ENCODE measurements at regions of chr14 and their contacts with region 1.

Region 1: DNA sequence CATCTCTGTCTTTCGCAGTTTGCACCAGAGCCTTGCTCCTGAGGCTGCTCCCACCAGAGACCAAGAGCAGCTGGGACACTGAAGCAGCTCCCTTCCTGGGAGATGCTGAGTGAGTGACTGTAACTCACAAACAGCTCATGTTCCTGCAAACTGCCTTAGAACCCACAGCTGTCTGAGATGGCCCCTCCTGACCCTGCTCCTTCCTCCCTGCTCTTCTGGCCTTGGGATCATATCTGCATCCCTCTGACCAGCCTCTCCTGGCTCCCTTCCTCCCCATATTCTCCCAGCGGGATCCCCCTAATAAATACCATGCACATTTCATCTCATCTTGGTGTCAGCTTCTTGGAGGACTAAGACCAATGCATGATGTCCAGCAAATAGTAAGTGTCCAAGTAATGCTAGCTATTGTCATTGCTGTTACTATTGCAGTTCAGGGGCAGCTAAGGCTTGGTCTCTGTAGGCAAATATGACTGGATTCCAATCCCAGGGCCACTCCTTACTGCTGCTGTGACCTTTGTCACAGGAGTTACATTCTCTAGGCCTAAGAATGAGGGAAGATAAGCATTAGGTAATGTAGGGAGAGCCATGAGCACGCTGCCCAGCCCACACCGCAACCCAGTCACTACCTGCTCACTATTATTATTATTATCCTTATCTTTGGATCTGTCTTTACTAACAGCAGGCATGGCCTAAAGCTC is 47.9 kb downstream of the SYNE3 start:
- DNase-seq: peak; percentile 88 to 94
- H3K4me3 ChIP-seq: no peak overlapping the region
- H3K4me3 Mint-ChIP-seq: peak overlapping the region; percentile 57
- H3K27ac Mint-ChIP-seq: peak overlapping the region; percentile 94
- H3K4me1 ChIP-seq: peaks cover 58% of the 10 kb centered on the region
- H3K4me1 Mint-ChIP-seq: peaks cover 41% of the 10 kb centered on the region
- H3K27me3 ChIP-seq: no peaks in the 10 kb centered on the region
- H3K27me3 Mint-ChIP-seq: no peaks in the 10 kb centered on the region
- CTCF ChIP-seq: no peak

Region 2: GRCh38 chr14:95402176-95402575 is 66.4 kb before region 1 on chr14:
- CTCF ChIA-PET with region 1: no interaction called
- POLR2A ChIA-PET with region 1: no interaction called
- intact Hi-C with region 1: no loop called
- DNase-seq: no peak
- H3K4me3 ChIP-seq: no peak overlapping the region
- H3K4me3 Mint-ChIP-seq: no peak overlapping the region
- H3K27ac Mint-ChIP-seq: no peak overlapping the region
- H3K4me1 ChIP-seq: no peaks in the 10 kb centered on the region
- H3K4me1 Mint-ChIP-seq: no peaks in the 10 kb centered on the region
- H3K27me3 ChIP-seq: no peaks in the 10 kb centered on the region
- H3K27me3 Mint-ChIP-seq: no peaks in the 10 kb centered on the region
- CTCF ChIP-seq: no peak

Region 3: DNA sequence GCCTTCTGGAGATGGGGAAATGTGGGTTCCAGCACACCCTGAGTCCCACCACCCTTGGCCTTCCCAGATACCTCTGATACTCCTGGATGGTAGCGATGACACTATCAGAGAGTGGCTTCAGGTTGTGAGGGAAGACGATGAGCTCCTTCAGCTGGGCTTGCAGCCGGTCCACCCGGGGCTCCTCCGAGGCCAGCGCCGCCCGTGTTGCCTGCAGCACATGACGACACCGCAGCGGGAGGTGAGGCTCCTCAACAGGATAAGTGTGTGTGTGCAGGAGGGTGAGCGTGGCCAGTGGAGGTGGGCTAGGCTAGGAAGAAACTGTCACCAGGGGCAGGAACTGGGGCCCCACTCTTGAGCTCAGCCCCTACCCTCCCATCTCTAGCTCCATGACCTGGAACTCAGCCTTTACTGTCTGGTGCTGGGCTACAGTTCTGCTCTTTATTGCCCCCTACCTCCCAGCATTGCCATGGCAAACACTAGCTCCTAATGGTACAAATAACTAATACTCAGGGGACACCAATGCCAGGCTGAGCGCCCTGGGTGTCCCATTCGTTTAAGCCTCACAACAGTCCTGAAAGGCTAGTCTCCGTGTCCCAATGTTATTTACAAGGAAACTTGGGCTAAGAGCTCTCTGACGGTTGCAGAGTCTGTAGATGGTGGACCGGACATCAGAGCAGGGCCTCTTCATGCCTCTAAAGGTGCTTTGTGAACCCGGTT is 16.3 kb before region 1 on chr14:
- CTCF ChIA-PET with region 1: interaction called, 18 read pairs
- POLR2A ChIA-PET with region 1: interaction called, 4 read pairs
- intact Hi-C with region 1: loop called (anchors 2 kb)
- DNase-seq: peak in 1 of 2 experiments; percentile 36
- H3K4me3 ChIP-seq: no peak overlapping the region
- H3K4me3 Mint-ChIP-seq: no peak overlapping the region
- H3K27ac Mint-ChIP-seq: no peak overlapping the region
- H3K4me1 ChIP-seq: no peaks in the 10 kb centered on the region
- H3K4me1 Mint-ChIP-seq: no peaks in the 10 kb centered on the region
- H3K27me3 ChIP-seq: no peaks in the 10 kb centered on the region
- H3K27me3 Mint-ChIP-seq: no peaks in the 10 kb centered on the region
- CTCF ChIP-seq: peak; percentile 23 to 50

Region 4: DNA sequence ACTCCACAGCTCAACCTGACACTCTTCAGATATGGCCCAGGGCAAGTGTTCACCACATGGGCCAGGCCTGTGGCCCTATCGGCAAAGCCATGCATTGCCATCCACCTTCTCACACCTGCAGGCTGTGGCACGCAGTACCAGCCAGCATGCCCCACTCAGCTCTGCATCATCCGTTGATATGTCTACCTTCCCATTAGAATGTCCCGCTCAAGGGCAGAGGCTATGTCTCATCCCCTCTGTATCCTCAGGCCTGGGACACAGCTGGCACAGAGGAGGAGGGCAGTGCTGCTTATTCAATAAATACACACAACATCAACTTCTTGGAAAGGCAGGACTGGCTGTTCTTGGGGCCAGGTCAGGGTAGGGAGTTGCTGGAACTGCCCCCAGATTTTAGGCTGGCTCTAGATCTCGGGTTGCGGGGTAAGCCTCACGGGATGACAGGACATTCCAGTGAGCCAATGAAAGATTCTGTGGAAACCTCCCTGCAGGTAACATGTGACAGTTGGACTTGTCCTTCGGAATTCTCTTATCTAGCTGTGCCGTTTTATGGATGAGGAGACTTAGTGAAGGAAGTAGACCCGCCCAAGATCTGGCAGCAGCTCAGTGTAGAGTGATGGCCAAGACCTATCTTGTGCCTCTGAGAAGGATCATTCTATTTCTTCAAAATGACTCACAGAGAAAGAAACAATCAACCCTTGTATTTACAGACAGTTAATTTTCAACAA is 22.3 kb after region 1 on chr14:
- CTCF ChIA-PET with region 1: interaction called, 7 read pairs
- POLR2A ChIA-PET with region 1: interaction called, 7 read pairs
- intact Hi-C with region 1: loop called (anchors 1 kb)
- DNase-seq: peak; percentile 73 to 82
- H3K4me3 ChIP-seq: no peak overlapping the region
- H3K4me3 Mint-ChIP-seq: peak overlapping the region; percentile 41
- H3K27ac Mint-ChIP-seq: peak overlapping the region; percentile 85
- H3K4me1 ChIP-seq: peaks cover 50% of the 10 kb centered on the region
- H3K4me1 Mint-ChIP-seq: peaks cover 44% of the 10 kb centered on the region
- H3K27me3 ChIP-seq: no peaks in the 10 kb centered on the region
- H3K27me3 Mint-ChIP-seq: no peaks in the 10 kb centered on the region
- CTCF ChIP-seq: no peak

Region 5: DNA sequence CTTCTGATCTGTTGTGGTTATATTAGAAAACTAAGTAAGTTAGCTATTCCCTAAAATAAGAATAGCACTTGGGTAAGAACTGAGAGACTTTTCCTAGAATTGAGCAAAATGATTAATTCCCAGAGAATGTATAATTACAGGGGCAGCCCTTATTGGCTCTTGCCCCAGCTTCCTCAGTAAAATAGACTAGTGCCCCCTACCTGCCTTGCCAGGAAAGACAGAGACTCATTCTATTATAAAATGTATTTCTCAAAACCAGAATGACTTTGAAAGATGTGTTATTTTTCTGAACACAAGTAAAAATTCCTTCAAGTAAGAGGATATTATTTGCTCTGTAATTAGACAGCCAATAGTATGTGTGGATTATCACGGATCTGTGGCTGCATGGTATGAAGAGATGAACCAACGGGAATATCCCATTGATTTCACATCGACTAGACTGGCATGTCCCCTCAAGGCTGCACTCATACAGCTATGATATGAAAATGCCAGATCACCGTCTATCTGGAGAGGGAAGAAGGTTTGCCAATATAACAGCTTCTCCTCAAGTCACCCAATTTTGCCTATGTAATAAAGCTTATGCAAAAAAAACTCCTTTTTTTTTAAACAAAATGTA is 58.9 kb after region 1 on chr14:
- CTCF ChIA-PET with region 1: interaction called, 11 read pairs
- POLR2A ChIA-PET with region 1: interaction called, 3 read pairs
- intact Hi-C with region 1: loop called (anchors 2 kb)
- DNase-seq: peak in 1 of 2 experiments; percentile 53
- H3K4me3 ChIP-seq: no peak overlapping the region
- H3K4me3 Mint-ChIP-seq: no peak overlapping the region
- H3K27ac Mint-ChIP-seq: peak overlapping the region; percentile 80
- H3K4me1 ChIP-seq: peaks cover 70% of the 10 kb centered on the region
- H3K4me1 Mint-ChIP-seq: peaks cover 48% of the 10 kb centered on the region
- H3K27me3 ChIP-seq: no peaks in the 10 kb centered on the region
- H3K27me3 Mint-ChIP-seq: no peaks in the 10 kb centered on the region
- CTCF ChIP-seq: peak; percentile 53 to 62

Region 6: DNA sequence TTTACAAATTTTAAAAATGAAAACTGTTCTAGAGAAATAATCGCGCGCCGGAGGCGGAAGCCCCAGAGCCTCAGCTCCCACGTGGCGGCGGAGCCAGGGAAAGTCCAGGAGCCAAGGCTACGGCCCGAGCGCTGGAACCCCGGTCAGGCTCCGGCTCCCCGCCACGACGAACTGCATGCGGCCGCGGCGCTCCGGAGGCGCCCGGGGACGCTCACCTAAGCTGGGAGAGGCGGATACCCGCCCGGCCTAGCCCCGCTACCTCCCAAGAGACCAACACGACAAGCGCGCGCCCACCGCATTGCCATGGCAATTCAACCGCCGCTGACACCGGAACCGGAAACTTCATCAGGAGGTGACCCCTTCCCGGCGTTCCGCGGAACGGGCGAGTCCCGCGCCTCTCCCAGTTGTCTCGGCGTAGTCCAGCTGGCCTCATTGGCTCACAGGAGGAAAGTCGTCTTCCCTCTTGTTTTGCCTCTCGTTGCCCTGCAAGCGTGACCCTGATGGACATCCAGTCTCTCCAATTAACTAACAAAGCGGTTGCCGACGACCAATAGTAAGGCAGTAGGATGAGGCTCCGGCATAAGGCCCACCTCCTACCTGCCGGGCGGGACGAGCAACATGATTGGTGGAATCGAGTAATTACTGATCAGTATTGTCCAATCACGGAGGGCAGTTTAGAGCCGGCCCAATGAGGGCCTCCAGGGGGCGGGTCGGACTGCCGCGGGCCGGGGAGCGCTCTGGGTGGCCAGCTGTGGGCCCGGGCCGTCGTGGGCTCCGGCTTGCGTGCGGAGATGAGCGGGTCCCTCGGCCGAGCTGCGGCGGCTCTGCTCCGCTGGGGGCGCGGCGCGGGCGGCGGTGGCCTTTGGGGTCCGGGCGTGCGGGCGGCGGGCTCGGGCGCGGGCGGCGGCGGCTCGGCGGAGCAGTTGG is 66.0 kb after region 1 on chr14 and contains the start of gene GLRX5:
- CTCF ChIA-PET with region 1: no interaction called
- POLR2A ChIA-PET with region 1: interaction called, 5 read pairs
- intact Hi-C with region 1: loop called (anchors 2 kb)
- DNase-seq: peak; percentile 98 to 100
- H3K4me3 ChIP-seq: peak within 1 kb of the TSS; percentile 83
- H3K4me3 Mint-ChIP-seq: peak within 1 kb of the TSS; percentile 87
- H3K27ac Mint-ChIP-seq: peak within 1 kb of the TSS; percentile 50
- H3K4me1 ChIP-seq: peaks cover 37% of the 10 kb centered on the region
- H3K4me1 Mint-ChIP-seq: peaks cover 25% of the 10 kb centered on the region
- H3K27me3 ChIP-seq: no peaks in the 10 kb centered on the region
- H3K27me3 Mint-ChIP-seq: no peaks in the 10 kb centered on the region
- CTCF ChIP-seq: no peak
- total RNA-seq, gene GLRX5: 66.2 and 67.8 TPM in 2 replicates

Measured in Caco-2 (cell line).